Mammary epithelial cell (primary cell): ENCODE measurements at regions of chr2 and their contacts with region 1.

Region 1: GRCh38 chr2:46803911-46804670 is 111.5 kb downstream of the MCFD2 start:
- DNase-seq: peak; percentile 94
- H3K4me3 ChIP-seq: no peak overlapping the region
- H3K27ac ChIP-seq: peak overlapping the region; percentile 92
- H3K4me1 ChIP-seq: peaks cover 54% of the 10 kb centered on the region
- H3K27me3 ChIP-seq: no peaks in the 10 kb centered on the region
- CTCF ChIP-seq: no peak

Region 2: GRCh38 chr2:46719487-46719886 is 84.6 kb before region 1 on chr2:
- CTCF ChIA-PET with region 1: no interaction called
- dilution Hi-C with region 1: loop called (anchors 5 kb)
- in situ Hi-C with region 1: no loop called
- intact Hi-C with region 1: no loop called
- DNase-seq: peak; percentile 20
- H3K4me3 ChIP-seq: no peak overlapping the region
- H3K27ac ChIP-seq: no peak overlapping the region
- H3K4me1 ChIP-seq: peaks cover 13% of the 10 kb centered on the region
- H3K27me3 ChIP-seq: no peaks in the 10 kb centered on the region
- CTCF ChIP-seq: no peak

Region 3: GRCh38 chr2:46763861-46764260 is 40.2 kb before region 1 on chr2:
- CTCF ChIA-PET with region 1: no interaction called
- dilution Hi-C with region 1: loop called (anchors 5 kb)
- in situ Hi-C with region 1: no loop called
- intact Hi-C with region 1: no loop called
- DNase-seq: no peak
- H3K4me3 ChIP-seq: no peak overlapping the region
- H3K27ac ChIP-seq: no peak overlapping the region
- H3K4me1 ChIP-seq: no peaks in the 10 kb centered on the region
- H3K27me3 ChIP-seq: no peaks in the 10 kb centered on the region
- CTCF ChIP-seq: no peak

Region 4: GRCh38 chr2:46857893-46858701 is 54.0 kb after region 1 on chr2:
- CTCF ChIA-PET with region 1: interaction called, 3 read pairs
- dilution Hi-C with region 1: no loop called
- in situ Hi-C with region 1: no loop called
- intact Hi-C with region 1: loop called (anchors 5 kb)
- DNase-seq: peak; percentile 45
- H3K4me3 ChIP-seq: no peak overlapping the region
- H3K27ac ChIP-seq: no peak overlapping the region
- H3K4me1 ChIP-seq: peaks cover 43% of the 10 kb centered on the region
- H3K27me3 ChIP-seq: no peaks in the 10 kb centered on the region
- CTCF ChIP-seq: no peak

Region 5: GRCh38 chr2:46893269-46893945 is 89.3 kb after region 1 on chr2:
- CTCF ChIA-PET with region 1: no interaction called
- dilution Hi-C with region 1: no loop called
- in situ Hi-C with region 1: no loop called
- intact Hi-C with region 1: no loop called
- DNase-seq: no peak
- H3K4me3 ChIP-seq: no peak overlapping the region
- H3K27ac ChIP-seq: no peak overlapping the region
- H3K4me1 ChIP-seq: peaks cover 5% of the 10 kb centered on the region
- H3K27me3 ChIP-seq: no peaks in the 10 kb centered on the region
- CTCF ChIP-seq: no peak

Region 6: DNA sequence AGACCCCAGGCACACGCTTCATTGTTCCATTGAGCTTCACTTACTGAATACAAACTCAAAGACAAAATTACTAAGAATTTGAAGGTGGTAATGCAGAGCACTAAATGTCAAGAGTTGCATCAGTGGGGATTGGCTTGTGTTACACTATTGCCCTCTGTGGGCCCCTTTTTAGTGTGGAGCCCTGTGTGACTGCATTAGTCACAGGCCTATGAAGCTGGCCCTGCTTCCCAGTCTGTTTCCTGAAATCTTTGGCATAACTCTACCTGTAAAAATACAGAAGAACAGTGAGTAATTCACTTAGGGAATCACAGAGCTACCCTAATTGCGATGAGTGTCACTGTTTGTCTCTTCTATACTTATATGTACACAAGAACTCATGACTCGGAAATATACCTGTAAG is 391.1 kb after region 1 on chr2:
- CTCF ChIA-PET with region 1: no interaction called
- dilution Hi-C with region 1: no loop called
- in situ Hi-C with region 1: no loop called
- intact Hi-C with region 1: no loop called
- DNase-seq: peak; percentile 71
- H3K4me3 ChIP-seq: no peak overlapping the region
- H3K27ac ChIP-seq: no peak overlapping the region
- H3K4me1 ChIP-seq: peaks cover 84% of the 10 kb centered on the region
- H3K27me3 ChIP-seq: no peaks in the 10 kb centered on the region
- CTCF ChIP-seq: no peak